ENCODE measurements at regions of chr5 and their contacts with region 1.

Region 1: DNA sequence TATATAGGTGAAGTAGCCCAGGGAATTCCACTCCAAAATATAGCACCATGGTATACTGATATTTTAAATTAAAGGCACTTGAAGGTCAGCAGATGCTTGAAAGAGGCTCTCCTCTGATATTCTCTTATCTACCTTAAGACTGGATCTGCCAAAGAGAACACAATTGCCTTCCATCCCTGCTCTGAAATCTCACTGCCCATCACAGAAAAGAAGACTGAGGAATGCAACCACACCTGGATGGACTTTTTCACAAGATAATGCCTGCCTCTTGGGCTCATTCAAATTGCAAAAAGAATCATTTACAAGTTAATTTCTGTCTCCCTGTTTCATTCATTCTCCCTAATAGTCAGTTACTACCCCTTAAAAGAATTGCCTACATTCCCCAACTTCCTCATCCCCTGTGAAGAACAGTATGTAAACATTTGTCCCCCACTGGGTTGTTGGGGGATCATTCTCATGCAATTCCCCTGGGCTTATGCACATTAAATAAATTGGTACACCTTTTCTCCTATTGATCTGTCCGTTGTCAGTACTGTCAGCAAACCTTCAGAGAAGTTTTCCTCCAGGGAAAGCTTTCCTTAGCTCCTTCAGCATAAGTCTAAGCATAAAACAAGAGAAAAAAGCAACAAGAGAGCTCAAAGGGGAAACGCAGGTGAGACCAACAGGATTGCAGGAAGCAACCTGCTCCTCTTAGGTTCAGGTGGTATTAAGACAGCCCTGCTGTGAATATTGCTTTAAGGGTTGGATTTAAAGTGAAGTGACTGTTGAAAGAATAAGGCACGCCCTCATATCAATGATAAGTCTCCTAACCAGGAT is 171.4 kb upstream of the SLC30A5 start:
- DNase-seq: no peak
- ATAC-seq: no peak
- H3K4me3 ChIP-seq: no peak overlapping the region
- H3K27ac ChIP-seq: no peak overlapping the region
- H3K4me1 ChIP-seq: no peaks in the 10 kb centered on the region
- H3K27me3 ChIP-seq: peaks cover 5% of the 10 kb centered on the region
- CTCF ChIP-seq: no peak

Region 2: DNA sequence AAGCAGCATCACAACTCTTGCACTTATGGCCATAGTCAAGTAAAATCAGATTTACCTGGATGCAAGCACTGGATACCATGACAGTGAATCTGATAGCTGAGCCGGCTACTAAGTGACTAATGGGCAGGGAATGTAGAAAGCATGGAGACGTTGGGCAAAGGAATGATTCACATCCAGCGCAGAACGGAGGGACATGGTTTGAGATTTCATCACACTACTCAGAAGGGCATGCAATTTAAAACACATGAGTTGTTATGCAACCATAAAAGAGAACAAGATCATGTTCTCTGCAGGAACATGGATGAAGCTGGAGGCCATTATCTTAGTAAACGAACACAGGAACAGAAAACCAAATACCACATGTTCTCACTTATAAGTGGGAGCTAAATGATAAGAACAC is 875.9 kb before region 1 on chr5:
- CTCF ChIA-PET with region 1: no interaction called
- POLR2A ChIA-PET with region 1: no interaction called
- in situ Hi-C with region 1: no loop called
- intact Hi-C with region 1: no loop called
- DNase-seq: peak; percentile 5
- ATAC-seq: peak; percentile 66; the same call in 1 of the 2 replicates
- H3K4me3 ChIP-seq: no peak overlapping the region
- H3K27ac ChIP-seq: no peak overlapping the region
- H3K4me1 ChIP-seq: no peaks in the 10 kb centered on the region
- H3K27me3 ChIP-seq: no peaks in the 10 kb centered on the region
- CTCF ChIP-seq: no peak

Region 3: GRCh38 chr5:68720884-68721610 is 201.3 kb before region 1 on chr5:
- CTCF ChIA-PET with region 1: no interaction called
- POLR2A ChIA-PET with region 1: interaction called, 17 read pairs
- in situ Hi-C with region 1: no loop called
- intact Hi-C with region 1: no loop called
- DNase-seq: no peak
- ATAC-seq: no peak
- H3K4me3 ChIP-seq: no peak overlapping the region
- H3K27ac ChIP-seq: no peak overlapping the region
- H3K4me1 ChIP-seq: no peaks in the 10 kb centered on the region
- H3K27me3 ChIP-seq: no peaks in the 10 kb centered on the region
- CTCF ChIP-seq: no peak

Region 4: DNA sequence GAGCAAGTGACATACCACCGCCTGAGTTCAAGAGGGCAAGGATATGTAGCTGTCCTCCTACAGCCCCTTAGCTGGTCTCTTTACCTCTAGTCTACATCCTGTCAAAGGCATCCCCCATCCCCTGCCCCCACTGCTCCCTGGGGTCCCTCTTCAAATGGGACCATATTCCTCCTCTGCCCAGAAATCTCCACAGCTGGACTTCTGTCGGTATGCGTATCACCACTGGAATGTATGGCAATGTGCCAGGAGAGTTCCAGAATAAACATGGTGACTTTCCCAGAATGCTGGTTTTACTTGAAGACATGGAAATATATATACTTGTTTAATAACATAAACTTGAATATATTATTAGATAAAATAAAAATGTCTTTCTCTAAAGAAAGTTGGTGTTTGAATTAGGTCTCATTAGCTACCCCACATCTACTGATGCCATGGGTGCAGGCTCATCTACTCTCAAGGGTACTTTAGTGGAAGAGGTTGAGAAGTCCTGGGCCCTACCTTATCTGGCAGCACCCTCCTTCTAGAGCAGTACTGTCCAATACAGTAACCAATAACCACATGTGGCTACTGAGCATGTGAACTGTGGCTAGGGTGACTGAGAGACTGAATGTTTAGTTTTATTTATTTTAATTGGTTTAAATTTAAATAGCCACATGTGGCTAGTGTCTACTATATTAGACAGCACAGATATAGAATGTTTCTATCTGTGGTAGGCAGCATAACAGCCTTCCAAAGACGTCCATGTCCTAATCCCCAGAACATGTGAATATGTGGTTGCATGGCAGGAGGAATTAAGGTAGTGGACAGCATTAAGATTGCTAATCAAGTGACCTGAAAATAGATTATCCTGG is 10.3 kb before region 1 on chr5:
- CTCF ChIA-PET with region 1: no interaction called
- POLR2A ChIA-PET with region 1: no interaction called
- in situ Hi-C with region 1: no loop called
- intact Hi-C with region 1: no loop called
- DNase-seq: no peak
- ATAC-seq: no peak
- H3K4me3 ChIP-seq: no peak overlapping the region
- H3K27ac ChIP-seq: no peak overlapping the region
- H3K4me1 ChIP-seq: no peaks in the 10 kb centered on the region
- H3K27me3 ChIP-seq: no peaks in the 10 kb centered on the region
- CTCF ChIP-seq: no peak